IMR-90 (cell line): ENCODE measurements at regions of chr22 and their contacts with region 1.

Region 1: GRCh38 chr22:31272522-31273446 is 19.5 kb downstream of the PIK3IP1 start:
- DNase-seq: peak; percentile 67
- ATAC-seq: peak; percentile 91
- H3K4me3 ChIP-seq: no peak overlapping the region
- H3K27ac ChIP-seq: no peak overlapping the region
- H3K4me1 ChIP-seq: peaks cover 5% of the 10 kb centered on the region; the same call in 1 of the 2 replicates
- H3K27me3 ChIP-seq: no peaks in the 10 kb centered on the region
- CTCF ChIP-seq: peak; percentile 80
- POLR2A ChIP-seq: no peak
- RAD21 ChIP-seq: peak; percentile 76

Region 2: DNA sequence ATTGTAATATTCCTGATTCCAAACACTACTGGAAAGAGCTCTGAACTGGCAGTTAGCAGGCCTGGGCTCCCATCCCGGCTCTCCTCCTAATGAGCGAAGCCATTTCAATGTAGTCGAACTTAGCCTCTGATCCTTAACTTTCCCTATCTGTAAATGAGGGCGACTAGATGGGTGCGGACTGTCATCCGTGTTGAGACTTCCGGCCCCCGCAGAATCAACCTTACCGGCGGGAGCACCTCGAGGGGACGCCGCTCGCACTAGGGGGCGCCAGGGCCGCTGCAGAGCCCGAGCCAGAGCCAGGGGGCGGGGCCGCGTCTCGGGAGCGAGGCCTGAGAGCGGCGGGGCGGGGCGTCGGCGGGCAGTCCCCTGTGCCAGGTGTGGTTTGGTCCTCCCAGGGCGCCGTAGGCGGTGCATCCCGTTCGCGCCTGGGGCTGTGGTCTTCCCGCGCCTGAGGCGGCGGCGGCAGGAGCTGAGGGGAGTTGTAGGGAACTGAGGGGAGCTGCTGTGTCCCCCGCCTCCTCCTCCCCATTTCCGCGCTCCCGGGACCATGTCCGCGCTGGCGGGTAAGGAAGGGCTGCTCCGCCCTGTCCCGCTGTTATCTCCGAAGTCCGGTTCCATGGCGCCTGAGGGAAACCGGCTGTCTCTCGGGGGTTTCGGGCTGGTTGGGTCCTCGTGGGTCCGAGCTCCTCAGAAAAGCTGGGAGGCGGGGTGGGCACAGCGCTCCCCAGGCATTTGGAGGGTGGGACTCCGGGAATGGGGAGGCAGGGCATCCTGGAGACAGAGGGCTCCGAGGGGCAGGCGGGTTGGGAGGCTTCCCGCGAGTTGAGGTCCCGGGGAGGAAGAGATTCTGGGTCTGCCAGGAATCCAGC is 60.7 kb before region 1 on chr22 and contains the start of gene LIMK2:
- CTCF ChIA-PET with region 1: no interaction called
- POLR2A ChIA-PET with region 1: no interaction called
- dilution Hi-C with region 1: no loop called
- in situ Hi-C with region 1: no loop called
- intact Hi-C with region 1: loop called (anchors 2 kb)
- DNase-seq: peak; percentile 73
- ATAC-seq: peak; percentile 99
- H3K4me3 ChIP-seq: peak within 1 kb of the TSS; percentile 80
- H3K27ac ChIP-seq: peak within 1 kb of the TSS; percentile 30
- H3K4me1 ChIP-seq: peaks cover 4% of the 10 kb centered on the region; the same call in 1 of the 2 replicates
- H3K27me3 ChIP-seq: no peaks in the 10 kb centered on the region
- CTCF ChIP-seq: peak; percentile 92
- POLR2A ChIP-seq: no peak
- RAD21 ChIP-seq: peak; percentile 70
- total RNA-seq, gene LIMK2: 25.0 and 31.9 TPM in 2 replicates

Region 3: GRCh38 chr22:31262312-31263080 is 10.3 kb before region 1 on chr22:
- CTCF ChIA-PET with region 1: interaction called, 12 read pairs
- POLR2A ChIA-PET with region 1: no interaction called
- dilution Hi-C with region 1: no loop called
- in situ Hi-C with region 1: no loop called
- intact Hi-C with region 1: no loop called
- DNase-seq: no peak
- ATAC-seq: no peak
- H3K4me3 ChIP-seq: no peak overlapping the region
- H3K27ac ChIP-seq: no peak overlapping the region
- H3K4me1 ChIP-seq: no peaks in the 10 kb centered on the region
- H3K27me3 ChIP-seq: no peaks in the 10 kb centered on the region
- CTCF ChIP-seq: no peak
- POLR2A ChIP-seq: no peak
- RAD21 ChIP-seq: no peak

Region 4: GRCh38 chr22:31327883-31328696 is 55.3 kb after region 1 on chr22:
- CTCF ChIA-PET with region 1: no interaction called
- POLR2A ChIA-PET with region 1: no interaction called
- dilution Hi-C with region 1: no loop called
- in situ Hi-C with region 1: no loop called
- intact Hi-C with region 1: no loop called
- DNase-seq: no peak
- ATAC-seq: peak; percentile 71
- H3K4me3 ChIP-seq: no peak overlapping the region
- H3K27ac ChIP-seq: no peak overlapping the region
- H3K4me1 ChIP-seq: peaks cover 2% of the 10 kb centered on the region; the same call in 1 of the 2 replicates
- H3K27me3 ChIP-seq: no peaks in the 10 kb centered on the region
- CTCF ChIP-seq: no peak
- POLR2A ChIP-seq: no peak
- RAD21 ChIP-seq: no peak

Region 5: GRCh38 chr22:31489604-31490495 is 217.1 kb after region 1 on chr22 and contains the start of gene EIF4ENIF1:
- CTCF ChIA-PET with region 1: no interaction called
- POLR2A ChIA-PET with region 1: no interaction called
- dilution Hi-C with region 1: no loop called
- in situ Hi-C with region 1: no loop called
- intact Hi-C with region 1: no loop called
- DNase-seq: peak; percentile 78
- ATAC-seq: peak; percentile 94
- H3K4me3 ChIP-seq: peak within 1 kb of the TSS; percentile 72
- H3K27ac ChIP-seq: peak within 1 kb of the TSS; percentile 98
- H3K4me1 ChIP-seq: peaks cover 2% of the 10 kb centered on the region; the same call in 1 of the 2 replicates
- H3K27me3 ChIP-seq: no peaks in the 10 kb centered on the region
- CTCF ChIP-seq: no peak
- POLR2A ChIP-seq: no peak; the same call in 1 of the 2 replicates
- RAD21 ChIP-seq: no peak
- total RNA-seq, gene EIF4ENIF1: 14.7 and 16.4 TPM in 2 replicates

Region 6: GRCh38 chr22:31585161-31585859 is 312.5 kb after region 1 on chr22:
- CTCF ChIA-PET with region 1: no interaction called
- POLR2A ChIA-PET with region 1: no interaction called
- dilution Hi-C with region 1: no loop called
- in situ Hi-C with region 1: no loop called
- intact Hi-C with region 1: no loop called
- DNase-seq: peak; percentile 60
- ATAC-seq: peak; percentile 33; the same call in 1 of the 2 replicates
- H3K4me3 ChIP-seq: no peak overlapping the region
- H3K27ac ChIP-seq: peak overlapping the region; percentile 79
- H3K4me1 ChIP-seq: peaks cover 22% of the 10 kb centered on the region
- H3K27me3 ChIP-seq: no peaks in the 10 kb centered on the region
- CTCF ChIP-seq: no peak
- POLR2A ChIP-seq: no peak
- RAD21 ChIP-seq: no peak